ENCODE measurements at regions of chr10 and their contacts with region 1.

Region 1: DNA sequence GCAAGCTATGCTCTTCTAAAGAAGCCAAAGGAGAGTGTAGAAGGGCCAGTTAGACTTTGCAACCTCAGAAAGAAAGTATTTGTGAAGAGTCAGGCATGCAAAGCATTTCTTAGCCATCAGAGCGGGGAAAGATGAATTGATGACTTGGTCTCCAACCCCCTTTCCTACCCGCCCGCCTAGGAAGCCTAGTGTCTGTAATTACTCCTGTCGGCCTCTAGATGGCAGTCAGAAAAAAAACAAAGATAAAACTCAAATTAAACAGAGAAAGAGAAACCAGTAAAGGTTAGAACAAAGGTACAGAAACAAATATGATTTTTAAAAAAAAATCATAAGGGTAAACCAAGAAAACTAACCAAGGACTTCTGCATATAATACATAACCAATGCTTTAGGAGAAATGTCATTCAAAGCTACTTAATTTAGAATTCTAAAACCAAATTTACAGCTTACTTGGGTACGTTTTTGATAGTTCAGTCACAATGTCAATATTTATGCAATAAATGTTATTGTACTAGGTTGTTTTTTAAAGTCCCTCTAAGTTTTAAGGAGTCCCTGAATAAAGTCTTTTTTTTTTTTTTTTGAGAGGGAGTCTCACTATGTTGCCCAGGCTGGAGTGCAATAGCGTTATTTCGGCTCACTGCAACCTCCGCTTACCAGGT is 97.6 kb downstream of the LYZL1 start:
- DNase-seq: peak in 3 of 9 experiments; percentile 21 to 56 (median 43)
- ATAC-seq: peak; percentile 94
- H3K4me3 ChIP-seq: no peak overlapping the region
- H3K4me3 Mint-ChIP-seq: peak overlapping the region; percentile 52
- H3K27ac ChIP-seq: no peak overlapping the region
- H3K27ac Mint-ChIP-seq: no peak overlapping the region
- H3K4me1 ChIP-seq: no peaks in the 10 kb centered on the region
- H3K4me1 Mint-ChIP-seq: peaks cover 4% of the 10 kb centered on the region
- H3K27me3 ChIP-seq: no peaks in the 10 kb centered on the region
- H3K27me3 Mint-ChIP-seq: no peaks in the 10 kb centered on the region
- CTCF ChIP-seq: peak; percentile 79

Region 2: DNA sequence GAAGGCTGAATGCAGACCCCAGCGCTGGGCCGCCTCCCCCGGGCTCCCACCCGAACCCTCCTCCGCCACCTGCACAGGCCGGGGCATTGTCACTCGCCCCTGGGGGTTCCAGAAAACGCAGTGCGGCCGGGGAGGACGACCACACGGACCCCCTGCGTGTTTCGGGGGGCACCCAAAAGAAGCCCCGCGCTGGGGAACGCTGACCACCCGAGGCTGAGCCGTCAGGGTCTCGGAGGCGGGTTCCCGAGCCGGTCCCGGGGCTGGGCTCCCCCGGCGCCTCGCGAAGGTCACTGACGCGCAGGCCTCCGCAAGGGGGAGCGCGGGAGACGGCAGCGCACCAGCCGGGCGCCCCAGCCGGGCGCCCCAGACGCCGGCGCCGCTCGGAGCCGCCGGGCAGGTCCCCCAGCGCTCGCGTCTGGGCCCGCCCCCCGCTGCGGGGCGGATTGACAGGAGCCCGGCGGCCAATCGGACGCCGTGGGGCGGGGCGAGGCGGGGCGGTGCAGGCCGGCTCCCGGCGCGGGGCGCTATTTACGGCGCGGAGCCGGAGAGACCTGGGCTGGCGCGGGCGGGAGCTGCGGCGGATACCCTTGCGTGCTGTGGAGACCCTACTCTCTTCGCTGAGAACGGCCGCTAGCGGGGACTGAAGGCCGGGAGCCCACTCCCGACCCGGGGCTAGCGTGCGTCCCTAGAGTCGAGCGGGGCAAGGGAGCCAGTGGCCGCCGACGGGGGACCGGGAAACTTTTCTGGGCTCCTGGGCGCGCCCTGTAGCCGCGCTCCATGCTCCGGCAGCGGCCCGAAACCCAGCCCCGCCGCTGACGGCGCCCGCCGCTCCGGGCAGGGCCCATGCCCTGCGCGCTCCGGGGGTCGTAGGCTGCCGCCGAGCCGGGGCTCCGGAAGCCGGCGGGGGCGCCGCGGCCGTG is 709.2 kb before region 1 on chr10 and contains the start of gene BAMBI:
- CTCF ChIA-PET with region 1: no interaction called
- POLR2A ChIA-PET with region 1: no interaction called
- intact Hi-C with region 1: loop called (anchors 5 kb)
- DNase-seq: peak; percentile 76 to 95 (median 88)
- ATAC-seq: peak; percentile 96
- H3K4me3 ChIP-seq: peak within 1 kb of the TSS; percentile 53 to 59
- H3K4me3 Mint-ChIP-seq: peak within 1 kb of the TSS; percentile 86
- H3K27ac ChIP-seq: no peak within 1 kb of the TSS
- H3K27ac Mint-ChIP-seq: no peak within 1 kb of the TSS
- H3K4me1 ChIP-seq: peaks cover 34% of the 10 kb centered on the region
- H3K4me1 Mint-ChIP-seq: peaks cover 31% of the 10 kb centered on the region
- H3K27me3 ChIP-seq: peaks cover 19 to 20% of the 10 kb centered on the region in 2 experiments
- H3K27me3 Mint-ChIP-seq: peaks cover 68% of the 10 kb centered on the region
- CTCF ChIP-seq: peak; percentile 40
- total RNA-seq, gene BAMBI: 3.5 to 3.6 TPM

Region 3: GRCh38 chr10:29266641-29267040 is 119.8 kb before region 1 on chr10:
- CTCF ChIA-PET with region 1: no interaction called
- POLR2A ChIA-PET with region 1: no interaction called
- intact Hi-C with region 1: no loop called
- DNase-seq: no peak
- ATAC-seq: no peak
- H3K4me3 ChIP-seq: no peak overlapping the region
- H3K4me3 Mint-ChIP-seq: no peak overlapping the region
- H3K27ac ChIP-seq: no peak overlapping the region
- H3K27ac Mint-ChIP-seq: no peak overlapping the region
- H3K4me1 ChIP-seq: no peaks in the 10 kb centered on the region
- H3K4me1 Mint-ChIP-seq: no peaks in the 10 kb centered on the region
- H3K27me3 ChIP-seq: no peaks in the 10 kb centered on the region
- H3K27me3 Mint-ChIP-seq: peaks cover 19% of the 10 kb centered on the region
- CTCF ChIP-seq: no peak

Region 4: GRCh38 chr10:29297678-29298077 is 88.8 kb before region 1 on chr10:
- CTCF ChIA-PET with region 1: no interaction called
- POLR2A ChIA-PET with region 1: no interaction called
- intact Hi-C with region 1: no loop called
- DNase-seq: no peak
- ATAC-seq: no peak
- H3K4me3 ChIP-seq: no peak overlapping the region
- H3K4me3 Mint-ChIP-seq: no peak overlapping the region
- H3K27ac ChIP-seq: no peak overlapping the region
- H3K27ac Mint-ChIP-seq: no peak overlapping the region
- H3K4me1 ChIP-seq: no peaks in the 10 kb centered on the region
- H3K4me1 Mint-ChIP-seq: no peaks in the 10 kb centered on the region
- H3K27me3 ChIP-seq: peaks cover 0 to 2% of the 10 kb centered on the region in 2 experiments
- H3K27me3 Mint-ChIP-seq: peaks cover 18% of the 10 kb centered on the region
- CTCF ChIP-seq: no peak

Region 5: GRCh38 chr10:29443745-29444523 is 57.5 kb after region 1 on chr10:
- CTCF ChIA-PET with region 1: interaction called, 15 read pairs
- POLR2A ChIA-PET with region 1: interaction called, 3 read pairs
- intact Hi-C with region 1: loop called (anchors 1 to 2 kb)
- DNase-seq: no peak
- ATAC-seq: no peak
- H3K4me3 ChIP-seq: no peak overlapping the region
- H3K4me3 Mint-ChIP-seq: no peak overlapping the region
- H3K27ac ChIP-seq: no peak overlapping the region
- H3K27ac Mint-ChIP-seq: no peak overlapping the region
- H3K4me1 ChIP-seq: no peaks in the 10 kb centered on the region
- H3K4me1 Mint-ChIP-seq: peaks cover 2% of the 10 kb centered on the region
- H3K27me3 ChIP-seq: no peaks in the 10 kb centered on the region
- H3K27me3 Mint-ChIP-seq: no peaks in the 10 kb centered on the region
- CTCF ChIP-seq: no peak

Region 6: GRCh38 chr10:29496341-29497162 is 110.1 kb after region 1 on chr10:
- CTCF ChIA-PET with region 1: interaction called, 16 read pairs
- POLR2A ChIA-PET with region 1: no interaction called
- intact Hi-C with region 1: loop called in 1 of 2 experiments (anchors 5 kb)
- DNase-seq: peak; percentile 21 to 73 (median 45)
- ATAC-seq: no peak
- H3K4me3 ChIP-seq: no peak overlapping the region
- H3K4me3 Mint-ChIP-seq: no peak overlapping the region
- H3K27ac ChIP-seq: no peak overlapping the region
- H3K27ac Mint-ChIP-seq: no peak overlapping the region
- H3K4me1 ChIP-seq: no peaks in the 10 kb centered on the region
- H3K4me1 Mint-ChIP-seq: peaks cover 2% of the 10 kb centered on the region
- H3K27me3 ChIP-seq: no peaks in the 10 kb centered on the region
- H3K27me3 Mint-ChIP-seq: no peaks in the 10 kb centered on the region
- CTCF ChIP-seq: peak; percentile 96

Measured in CD8-positive, alpha-beta T cell (primary cell).